AG04449 (cell line): ENCODE measurements at regions of chr15 and their contacts with region 1.

Region 1: DNA sequence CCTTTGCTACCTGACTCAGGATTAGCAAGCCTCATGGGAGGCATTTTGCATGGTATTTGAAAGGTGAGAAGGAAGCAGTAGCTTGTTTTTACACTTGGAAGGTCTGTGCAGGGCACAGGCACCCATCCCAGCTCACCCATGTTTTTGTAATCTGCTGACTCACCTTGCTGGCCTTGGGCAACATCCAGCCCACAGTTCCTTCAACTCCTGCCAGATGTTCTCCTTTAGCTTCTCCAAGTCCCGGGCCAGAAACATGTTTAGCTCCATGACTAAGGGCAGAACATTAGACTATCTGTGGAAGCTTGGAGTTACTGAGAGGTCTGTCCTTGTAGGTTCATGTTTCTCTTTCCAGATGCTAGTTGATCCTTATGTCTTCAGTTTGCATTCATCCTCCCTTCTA is 12.4 kb upstream of the ZNF770 start:
- DNase-seq: no peak
- H3K4me3 ChIP-seq: no peak overlapping the region
- CTCF ChIP-seq: no peak

Region 2: GRCh38 chr15:34987985-34988873 is 12.3 kb before region 1 on chr15 and contains the start of gene ZNF770:
- CTCF ChIA-PET with region 1: no interaction called
- POLR2A ChIA-PET with region 1: interaction called, 15 read pairs
- DNase-seq: no peak
- H3K4me3 ChIP-seq: peak within 1 kb of the TSS; percentile 98
- CTCF ChIP-seq: no peak

Region 3: DNA sequence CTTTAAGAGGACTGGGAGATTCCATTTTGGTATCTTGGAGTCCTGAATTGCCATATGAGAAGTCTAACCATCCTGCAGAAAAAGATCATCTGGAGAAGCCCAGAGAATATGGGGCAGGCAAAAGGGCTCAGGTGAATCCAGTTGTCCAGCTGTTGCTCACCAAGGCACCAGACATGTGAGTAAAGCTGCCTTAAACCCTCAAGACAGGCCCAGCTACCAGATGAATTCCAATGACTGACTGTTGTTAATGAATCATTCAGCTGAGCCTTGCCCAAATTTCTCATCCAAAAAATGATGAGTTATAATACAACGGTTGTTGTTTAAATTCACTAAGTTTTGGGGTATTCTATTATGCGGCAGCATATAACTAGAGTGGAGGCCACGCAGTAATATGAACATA is 106.6 kb after region 1 on chr15:
- CTCF ChIA-PET with region 1: no interaction called
- POLR2A ChIA-PET with region 1: no interaction called
- DNase-seq: no peak
- H3K4me3 ChIP-seq: no peak overlapping the region
- CTCF ChIP-seq: no peak